Calu3 (cell line): ENCODE measurements at regions of chr10 and their contacts with region 1.

Region 1: DNA sequence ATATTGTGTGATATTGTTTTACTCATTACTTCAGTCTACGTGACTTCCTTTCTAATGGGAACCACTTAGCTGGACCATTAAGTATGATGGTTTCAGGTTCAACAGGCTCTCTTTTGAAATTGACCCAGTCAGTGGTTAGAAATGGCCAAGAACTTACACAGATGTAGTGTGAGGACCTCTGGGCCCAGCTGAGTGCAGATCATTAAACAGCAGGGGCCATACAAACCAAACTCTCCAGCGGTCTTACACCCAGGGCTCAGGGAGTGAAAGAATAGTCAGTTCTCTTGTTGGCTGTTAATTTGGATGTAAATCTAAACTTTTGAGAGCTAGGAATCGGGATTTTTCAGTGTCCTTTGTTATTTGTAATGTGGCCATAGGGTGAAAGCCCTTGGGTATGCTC is 107.3 kb downstream of the CELF2 start:
- DNase-seq: no peak
- H3K4me3 Mint-ChIP-seq: no peak overlapping the region
- H3K27ac Mint-ChIP-seq: no peak overlapping the region
- H3K4me1 Mint-ChIP-seq: no peaks in the 10 kb centered on the region
- H3K27me3 Mint-ChIP-seq: no peaks in the 10 kb centered on the region
- CTCF ChIP-seq: no peak

Region 2: DNA sequence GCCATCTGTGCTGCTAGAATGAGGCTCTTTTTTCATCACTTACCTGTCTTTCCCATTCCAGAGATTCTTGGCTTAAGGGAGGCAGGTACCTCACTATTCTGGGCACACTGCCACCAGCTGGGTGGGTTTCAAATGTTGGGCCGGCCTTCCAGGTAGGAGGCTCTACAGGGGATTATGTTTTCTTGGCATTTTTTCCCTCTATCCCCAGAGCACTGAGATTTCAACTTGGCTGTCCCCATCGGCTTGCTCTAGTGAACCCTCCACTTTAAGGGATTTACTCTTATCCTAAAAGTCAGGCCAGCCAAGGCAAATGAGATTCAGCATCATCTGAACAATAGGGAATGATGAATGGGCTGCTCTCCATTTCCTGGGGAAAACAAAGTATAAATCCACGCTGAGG is 817.5 kb before region 1 on chr10:
- CTCF ChIA-PET with region 1: no interaction called
- intact Hi-C with region 1: loop called (anchors 5 kb)
- DNase-seq: no peak
- H3K4me3 Mint-ChIP-seq: no peak overlapping the region
- H3K27ac Mint-ChIP-seq: no peak overlapping the region
- H3K4me1 Mint-ChIP-seq: no peaks in the 10 kb centered on the region
- H3K27me3 Mint-ChIP-seq: no peaks in the 10 kb centered on the region
- CTCF ChIP-seq: no peak

Region 3: DNA sequence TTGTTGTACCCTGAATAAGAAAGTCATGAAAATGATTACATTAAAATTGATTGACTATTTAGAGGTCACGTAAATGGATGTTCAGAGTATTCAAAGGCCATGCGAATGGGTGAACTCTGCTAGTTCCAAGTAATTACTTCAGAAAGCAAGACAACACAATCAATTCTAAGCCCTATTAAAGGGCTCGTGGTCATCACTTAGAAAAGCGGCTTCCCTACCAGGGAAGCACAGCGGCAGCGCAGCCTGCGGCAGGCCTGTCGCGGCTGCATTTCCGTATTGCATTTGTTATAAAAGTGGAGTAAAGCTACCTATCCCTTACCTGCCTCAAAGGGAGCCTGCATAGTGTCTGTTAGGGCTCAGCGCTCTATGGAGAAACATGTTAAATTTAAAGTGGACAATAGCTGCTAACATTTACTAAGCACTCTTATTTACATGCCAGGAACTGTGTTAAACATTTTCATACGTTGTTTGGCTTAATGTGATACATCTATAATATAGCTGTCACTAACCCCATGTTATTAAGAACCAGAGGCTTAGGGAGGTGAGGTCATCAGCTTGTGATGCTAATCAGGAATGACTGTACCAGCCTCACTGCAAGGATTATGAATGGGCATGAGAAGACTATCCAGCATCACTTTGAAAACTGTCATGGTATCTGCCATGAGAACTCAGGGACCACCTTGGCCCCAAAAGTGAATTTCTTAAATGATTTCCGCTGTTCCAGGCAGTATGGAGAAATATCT is 80.2 kb after region 1 on chr10:
- CTCF ChIA-PET with region 1: no interaction called
- intact Hi-C with region 1: no loop called
- DNase-seq: no peak
- H3K4me3 Mint-ChIP-seq: no peak overlapping the region
- H3K27ac Mint-ChIP-seq: no peak overlapping the region
- H3K4me1 Mint-ChIP-seq: no peaks in the 10 kb centered on the region
- H3K27me3 Mint-ChIP-seq: peaks cover 23% of the 10 kb centered on the region
- CTCF ChIP-seq: no peak